Right ventricle myocardium superior (tissue), 1 donor: ENCODE measurements at regions of chr1 and their contacts with region 1.

Region 1: GRCh38 chr1:22416555-22417454 is 34.8 kb upstream of the ZBTB40 start:
- DNase-seq: peak; percentile 72
- ATAC-seq: peak; percentile 62

Region 2: DNA sequence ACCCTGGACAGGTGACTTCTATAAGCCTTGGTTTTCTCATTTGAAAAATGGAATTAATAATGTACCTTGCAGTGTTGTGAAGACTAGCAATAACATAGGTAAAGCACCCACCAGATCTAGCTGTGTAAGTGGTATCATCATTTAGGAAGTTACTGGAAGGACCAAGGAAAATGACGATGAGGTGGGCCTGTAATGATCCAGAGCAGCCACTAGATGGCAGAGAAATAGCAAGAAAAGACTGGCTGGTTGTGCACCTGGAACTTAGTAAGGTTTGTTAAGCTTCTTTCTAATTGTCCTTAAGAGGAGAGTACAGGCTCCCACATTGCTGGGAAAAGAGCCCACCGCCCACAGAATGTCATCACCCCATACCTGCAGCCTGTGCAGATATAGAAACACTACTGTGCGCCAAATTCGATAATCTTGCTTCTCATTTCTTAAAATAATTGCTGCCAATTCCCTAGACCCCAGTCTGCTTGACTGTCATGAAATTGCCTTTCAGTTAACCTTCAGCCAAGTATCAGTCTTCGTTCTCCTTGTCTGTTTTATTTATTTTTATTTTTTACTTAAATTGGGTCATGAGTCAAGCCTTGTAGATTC is 311.1 kb before region 1 on chr1:
- intact Hi-C with region 1: loop called (anchors 10 kb)
- DNase-seq: no peak
- ATAC-seq: peak; percentile 64

Region 3: DNA sequence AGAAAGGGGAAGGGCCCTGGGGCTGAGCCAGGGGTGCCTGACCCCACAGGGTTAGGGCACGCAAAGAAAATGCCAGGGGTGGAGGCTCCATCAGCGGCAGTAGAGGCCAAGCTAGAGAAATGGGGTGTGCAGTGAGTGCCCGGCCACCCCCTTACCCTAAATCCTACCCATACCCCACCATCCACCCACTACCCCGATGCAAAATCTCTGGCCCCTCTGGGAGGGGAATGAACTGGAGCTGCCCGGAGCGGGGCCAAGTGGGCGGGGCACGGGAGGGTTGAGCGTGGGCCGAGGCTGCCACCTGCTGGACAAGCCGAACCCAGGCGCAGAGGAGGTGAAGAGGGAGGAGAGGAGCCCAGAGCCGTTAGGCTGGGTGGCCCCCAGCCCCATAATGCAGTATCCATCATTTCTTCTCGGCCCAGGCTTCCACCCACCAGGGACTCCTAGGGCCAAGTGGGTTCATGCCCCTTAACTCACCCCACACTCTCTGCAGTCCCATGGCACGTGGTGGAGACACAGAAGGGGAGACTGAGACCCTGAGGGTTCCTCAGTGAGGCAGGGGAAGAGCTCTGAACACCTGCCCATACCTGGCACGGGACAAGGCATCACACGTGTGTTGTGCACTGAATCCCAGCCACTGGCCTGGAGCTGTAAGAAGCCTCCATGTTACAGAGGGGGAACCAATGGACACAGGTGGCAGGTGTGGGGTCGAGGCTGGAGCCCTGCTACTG is 225.3 kb after region 1 on chr1:
- intact Hi-C with region 1: loop called (anchors 2 kb)
- DNase-seq: peak; percentile 92
- ATAC-seq: peak; percentile 84